CD4-positive, alpha-beta T cell (primary cell): ENCODE measurements at regions of chr2 and their contacts with region 1.

Region 1: DNA sequence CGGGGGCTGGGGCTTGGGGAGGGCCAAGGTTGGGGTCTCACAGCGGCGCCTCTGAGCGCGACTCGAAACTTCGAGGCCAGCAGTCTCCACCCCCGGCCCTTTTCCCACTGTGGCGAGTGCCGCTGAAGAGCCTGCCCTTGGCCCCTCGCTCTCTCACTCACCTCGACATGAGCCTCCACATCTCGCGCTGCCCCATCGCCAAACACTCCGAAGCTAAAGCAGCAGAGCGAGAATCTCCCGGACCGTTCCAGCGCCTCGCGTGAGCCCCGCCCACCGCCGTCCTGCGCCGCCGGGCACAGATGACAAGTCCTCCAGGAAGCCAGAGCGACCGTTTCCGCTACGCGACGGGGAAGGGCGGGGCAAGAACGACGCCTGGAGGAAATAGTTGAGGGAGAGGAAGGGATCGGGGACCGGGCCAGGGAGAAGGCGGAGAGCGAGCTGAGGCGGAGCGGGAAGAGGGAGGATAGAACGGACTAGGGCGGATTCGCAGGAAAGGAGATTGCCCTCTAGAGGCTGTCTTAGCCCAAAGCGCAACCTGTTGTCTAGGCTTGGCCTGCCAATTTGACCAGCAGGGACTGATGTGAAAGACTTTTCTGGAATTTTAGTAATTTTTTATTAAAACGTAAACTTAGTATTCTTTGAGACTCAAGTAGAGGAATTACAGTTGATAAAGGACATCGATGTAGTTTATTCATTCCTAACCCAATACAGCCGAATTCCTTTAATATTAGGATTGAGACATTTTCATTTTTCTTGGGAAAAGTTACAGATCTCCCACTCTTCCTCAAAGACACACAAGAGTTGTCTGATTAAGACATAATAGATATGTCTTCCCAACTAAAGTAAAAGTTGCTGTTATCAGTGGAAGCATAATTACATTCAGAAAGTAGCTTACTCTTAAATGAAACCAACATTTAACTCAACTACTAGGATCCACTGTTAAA is at the start of gene HIBCH:
- DNase-seq: peak; percentile 59 to 91 (median 80)
- ATAC-seq: peak; percentile 87
- H3K4me3 ChIP-seq: peak within 1 kb of the TSS; percentile 87
- H3K4me3 Mint-ChIP-seq: peak within 1 kb of the TSS; percentile 95
- H3K27ac ChIP-seq: peak within 1 kb of the TSS; percentile 76 to 91
- H3K27ac Mint-ChIP-seq: peak within 1 kb of the TSS; percentile 89
- H3K4me1 ChIP-seq: peaks cover 28% of the 10 kb centered on the region
- H3K4me1 Mint-ChIP-seq: peaks cover 54% of the 10 kb centered on the region
- H3K27me3 ChIP-seq: no peaks in the 10 kb centered on the region
- H3K27me3 Mint-ChIP-seq: no peaks in the 10 kb centered on the region
- CTCF ChIP-seq: peak; percentile 73
- total RNA-seq, gene HIBCH: 3.5 to 7.1 TPM

Region 2: GRCh38 chr2:189440947-189441708 is 878.7 kb before region 1 on chr2 and contains the start of gene WDR75:
- CTCF ChIA-PET with region 1: no interaction called
- POLR2A ChIA-PET with region 1: no interaction called
- intact Hi-C with region 1: loop called in 1 of 2 experiments (anchors 5 kb)
- DNase-seq: peak; percentile 85 to 96 (median 90)
- ATAC-seq: peak; percentile 93
- H3K4me3 ChIP-seq: peak within 1 kb of the TSS; percentile 78
- H3K4me3 Mint-ChIP-seq: no peak within 1 kb of the TSS
- H3K27ac ChIP-seq: peak within 1 kb of the TSS; percentile 90 to 97
- H3K27ac Mint-ChIP-seq: peak within 1 kb of the TSS; percentile 97
- H3K4me1 ChIP-seq: peaks cover 21% of the 10 kb centered on the region
- H3K4me1 Mint-ChIP-seq: peaks cover 16% of the 10 kb centered on the region
- H3K27me3 ChIP-seq: no peaks in the 10 kb centered on the region
- H3K27me3 Mint-ChIP-seq: no peaks in the 10 kb centered on the region
- CTCF ChIP-seq: no peak
- total RNA-seq, gene WDR75: 38.1 to 45.3 TPM

Region 3: DNA sequence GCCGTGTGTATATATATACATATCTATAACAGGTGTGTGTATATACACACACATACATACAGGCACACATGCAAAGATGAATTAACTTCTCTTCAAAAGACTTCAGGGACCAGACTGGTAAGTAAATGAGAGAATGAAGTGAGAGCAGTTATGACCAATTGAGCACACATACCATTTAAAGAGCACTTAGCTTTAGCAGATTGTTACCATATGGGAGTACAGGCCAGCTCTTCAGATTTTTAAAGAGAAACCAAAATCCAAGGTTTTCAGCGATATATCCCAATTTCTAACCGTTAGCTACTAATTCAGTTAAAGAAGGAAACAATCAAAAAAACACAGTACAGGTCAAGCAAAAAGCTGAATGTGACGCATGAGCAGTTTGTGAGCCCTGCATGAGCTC is 47.3 kb after region 1 on chr2:
- CTCF ChIA-PET with region 1: no interaction called
- POLR2A ChIA-PET with region 1: no interaction called
- intact Hi-C with region 1: no loop called
- DNase-seq: no peak
- ATAC-seq: no peak
- H3K4me3 ChIP-seq: no peak overlapping the region
- H3K4me3 Mint-ChIP-seq: no peak overlapping the region
- H3K27ac ChIP-seq: no peak overlapping the region
- H3K27ac Mint-ChIP-seq: no peak overlapping the region
- H3K4me1 ChIP-seq: no peaks in the 10 kb centered on the region
- H3K4me1 Mint-ChIP-seq: peaks cover 9% of the 10 kb centered on the region
- H3K27me3 ChIP-seq: no peaks in the 10 kb centered on the region
- H3K27me3 Mint-ChIP-seq: no peaks in the 10 kb centered on the region
- CTCF ChIP-seq: no peak

Region 4: GRCh38 chr2:190511104-190511503 is 191.3 kb after region 1 on chr2:
- CTCF ChIA-PET with region 1: no interaction called
- POLR2A ChIA-PET with region 1: no interaction called
- intact Hi-C with region 1: no loop called
- DNase-seq: no peak
- ATAC-seq: no peak
- H3K4me3 ChIP-seq: no peak overlapping the region
- H3K4me3 Mint-ChIP-seq: no peak overlapping the region
- H3K27ac ChIP-seq: no peak overlapping the region
- H3K27ac Mint-ChIP-seq: no peak overlapping the region
- H3K4me1 ChIP-seq: peaks cover under 1% of the 10 kb centered on the region
- H3K4me1 Mint-ChIP-seq: peaks cover 21% of the 10 kb centered on the region
- H3K27me3 ChIP-seq: no peaks in the 10 kb centered on the region
- H3K27me3 Mint-ChIP-seq: no peaks in the 10 kb centered on the region
- CTCF ChIP-seq: no peak